ENCODE measurements at regions of chr6 and their contacts with region 1.

Region 1: GRCh38 chr6:166627033-166627874 is at the start of gene RPS6KA2:
- DNase-seq: peak; percentile 95 to 98
- H3K4me3 ChIP-seq: peak within 1 kb of the TSS; percentile 91
- H3K27ac ChIP-seq: peak within 1 kb of the TSS; percentile 30
- H3K4me1 ChIP-seq: peaks cover 29% of the 10 kb centered on the region
- H3K27me3 ChIP-seq: no peaks in the 10 kb centered on the region
- CTCF ChIP-seq: 0 out of 2 replicates have a peak, but pooled peaks have one; percentile 28
- total RNA-seq, gene RPS6KA2: 18.5 and 20.6 TPM in 2 replicates

Region 2: GRCh38 chr6:165321555-165322145 is 1305.6 kb before region 1 on chr6:
- CTCF ChIA-PET with region 1: no interaction called
- POLR2A ChIA-PET with region 1: no interaction called
- intact Hi-C with region 1: no loop called
- DNase-seq: no peak
- H3K4me3 ChIP-seq: no peak overlapping the region
- H3K27ac ChIP-seq: no peak overlapping the region
- H3K4me1 ChIP-seq: no peaks in the 10 kb centered on the region
- H3K27me3 ChIP-seq: peaks cover 16% of the 10 kb centered on the region; the same call in 1 of the 2 replicates
- CTCF ChIP-seq: no peak

Region 3: GRCh38 chr6:166435574-166435973 is 191.7 kb before region 1 on chr6:
- CTCF ChIA-PET with region 1: no interaction called
- POLR2A ChIA-PET with region 1: no interaction called
- intact Hi-C with region 1: no loop called
- DNase-seq: no peak
- H3K4me3 ChIP-seq: no peak overlapping the region
- H3K27ac ChIP-seq: no peak overlapping the region
- H3K4me1 ChIP-seq: no peaks in the 10 kb centered on the region
- H3K27me3 ChIP-seq: no peaks in the 10 kb centered on the region
- CTCF ChIP-seq: no peak

Region 4: DNA sequence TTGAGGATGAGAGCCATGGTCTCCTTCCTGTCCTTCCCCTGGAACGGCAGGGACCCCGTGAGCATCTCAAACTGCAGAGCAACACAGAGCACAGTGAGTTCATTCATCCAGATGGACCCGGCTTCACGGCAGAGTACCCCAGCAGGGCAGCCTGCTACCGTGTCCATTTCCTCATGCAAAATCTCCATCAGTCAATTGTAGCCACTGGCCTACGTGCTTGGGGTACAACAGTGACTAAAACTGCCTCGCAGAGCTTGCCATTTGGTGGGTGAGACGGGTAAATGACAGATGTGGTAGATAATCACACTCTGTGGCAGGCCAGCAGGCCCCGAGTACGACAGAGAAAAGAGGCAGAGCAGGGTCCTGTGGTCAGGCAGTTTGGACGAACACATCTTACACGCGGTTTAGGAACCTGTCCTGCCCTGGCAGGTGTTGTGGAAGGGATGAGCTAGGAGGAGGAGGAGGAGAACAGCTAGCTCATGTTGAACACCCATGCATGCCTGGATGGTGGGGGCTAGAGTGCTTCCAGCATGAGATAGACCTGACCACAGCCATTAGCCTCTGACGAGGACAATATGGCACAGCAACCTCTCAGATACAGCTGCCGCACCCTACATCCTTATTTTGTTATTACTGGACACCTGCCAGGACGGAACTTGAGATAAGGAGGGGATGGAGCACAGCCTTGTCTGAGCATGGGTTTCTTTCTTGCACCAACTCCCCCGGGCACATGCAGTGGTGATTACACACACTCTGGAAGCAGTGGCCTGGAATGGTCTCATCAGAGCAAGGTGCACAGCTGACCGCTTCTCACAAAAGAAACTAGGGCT is 136.4 kb before region 1 on chr6:
- CTCF ChIA-PET with region 1: no interaction called
- POLR2A ChIA-PET with region 1: no interaction called
- intact Hi-C with region 1: loop called (anchors 1 kb)
- DNase-seq: peak; percentile 46 to 65
- H3K4me3 ChIP-seq: no peak overlapping the region
- H3K27ac ChIP-seq: no peak overlapping the region
- H3K4me1 ChIP-seq: no peaks in the 10 kb centered on the region
- H3K27me3 ChIP-seq: no peaks in the 10 kb centered on the region
- CTCF ChIP-seq: no peak

Region 5: GRCh38 chr6:166541876-166542579 is 85.2 kb before region 1 on chr6:
- CTCF ChIA-PET with region 1: no interaction called
- POLR2A ChIA-PET with region 1: interaction called, 7 read pairs
- intact Hi-C with region 1: loop called (anchors 1 kb)
- DNase-seq: no peak
- H3K4me3 ChIP-seq: no peak overlapping the region; the same call in 1 of the 2 replicates
- H3K27ac ChIP-seq: peak overlapping the region; percentile 44
- H3K4me1 ChIP-seq: peaks cover 17% of the 10 kb centered on the region
- H3K27me3 ChIP-seq: no peaks in the 10 kb centered on the region
- CTCF ChIP-seq: no peak

Region 6: GRCh38 chr6:166611631-166612030 is 15.6 kb before region 1 on chr6:
- CTCF ChIA-PET with region 1: no interaction called
- POLR2A ChIA-PET with region 1: interaction called, 57 read pairs
- intact Hi-C with region 1: no loop called
- DNase-seq: peak; percentile 53 to 76
- H3K4me3 ChIP-seq: no peak overlapping the region
- H3K27ac ChIP-seq: peak overlapping the region; percentile 34
- H3K4me1 ChIP-seq: peaks cover 16% of the 10 kb centered on the region
- H3K27me3 ChIP-seq: no peaks in the 10 kb centered on the region
- CTCF ChIP-seq: no peak

Region 7: DNA sequence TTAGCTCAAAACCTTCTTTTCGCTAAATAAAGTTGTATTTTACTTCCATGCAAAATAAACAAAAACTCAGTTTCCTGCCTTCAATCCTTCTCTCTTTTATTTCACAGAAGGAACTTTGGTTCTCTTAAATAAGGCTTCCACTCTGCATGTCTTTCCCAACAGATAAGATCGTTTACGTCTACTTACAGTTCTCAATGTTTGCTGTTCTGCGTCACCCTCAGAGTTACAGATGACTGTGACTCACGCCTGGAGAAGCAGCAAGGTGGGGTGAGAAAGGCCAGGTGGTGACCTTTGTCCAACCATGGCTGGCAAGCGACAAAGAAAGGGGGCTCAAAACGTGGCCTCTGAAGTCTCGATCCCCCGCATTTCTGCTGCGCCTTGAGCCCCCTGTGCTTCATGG is 51.2 kb after region 1 on chr6:
- CTCF ChIA-PET with region 1: no interaction called
- POLR2A ChIA-PET with region 1: no interaction called
- intact Hi-C with region 1: loop called (anchors 2 kb)
- DNase-seq: peak; percentile 46 to 94
- H3K4me3 ChIP-seq: no peak overlapping the region; the same call in 1 of the 2 replicates
- H3K27ac ChIP-seq: peak overlapping the region; percentile 84
- H3K4me1 ChIP-seq: peaks cover 38% of the 10 kb centered on the region
- H3K27me3 ChIP-seq: no peaks in the 10 kb centered on the region
- CTCF ChIP-seq: no peak

Region 8: GRCh38 chr6:166999145-166999883 is 372.1 kb after region 1 on chr6 and contains the start of gene CEP43:
- CTCF ChIA-PET with region 1: no interaction called
- POLR2A ChIA-PET with region 1: no interaction called
- intact Hi-C with region 1: loop called (anchors 10 kb)
- DNase-seq: peak; percentile 77 to 89
- H3K4me3 ChIP-seq: peak within 1 kb of the TSS; percentile 98
- H3K27ac ChIP-seq: no peak within 1 kb of the TSS
- H3K4me1 ChIP-seq: peaks cover 16% of the 10 kb centered on the region
- H3K27me3 ChIP-seq: no peaks in the 10 kb centered on the region
- CTCF ChIP-seq: no peak
- total RNA-seq, gene CEP43: 18.1 and 19.7 TPM in 2 replicates

Region 9: DNA sequence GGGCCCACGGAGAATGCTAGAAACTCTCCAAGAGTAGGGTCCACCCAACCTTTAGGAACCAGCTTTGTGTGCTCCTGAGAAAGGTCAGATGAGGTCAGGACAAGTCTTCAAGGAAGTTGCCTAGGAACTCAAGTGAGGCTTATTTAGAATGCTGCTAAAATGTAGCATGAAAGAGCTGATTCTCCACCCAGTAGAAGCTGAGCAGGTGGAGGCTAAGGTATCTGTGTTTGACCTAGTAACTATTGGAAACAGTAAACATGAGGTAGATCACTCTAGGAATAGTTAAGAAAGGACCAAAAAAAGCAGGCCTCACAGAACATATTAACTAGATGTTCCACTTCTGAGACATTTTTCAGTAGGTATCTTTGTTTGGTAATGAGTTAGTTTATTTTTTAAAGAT is 385.8 kb after region 1 on chr6:
- CTCF ChIA-PET with region 1: no interaction called
- POLR2A ChIA-PET with region 1: no interaction called
- intact Hi-C with region 1: no loop called
- DNase-seq: no peak
- H3K4me3 ChIP-seq: no peak overlapping the region
- H3K27ac ChIP-seq: no peak overlapping the region
- H3K4me1 ChIP-seq: no peaks in the 10 kb centered on the region
- H3K27me3 ChIP-seq: no peaks in the 10 kb centered on the region
- CTCF ChIP-seq: no peak

Measured in PC-9 (cell line).